Cardiac septum (tissue), 1 donor: ENCODE measurements at regions of chr16 and their contacts with region 1.

Region 1: GRCh38 chr16:4538350-4539235 is at the start of gene CDIP1:
- DNase-seq: peak; percentile 98
- total RNA-seq, gene CDIP1: 42.1 TPM

Region 2: GRCh38 chr16:4574919-4575705 is 36.5 kb after region 1 on chr16:
- intact Hi-C with region 1: no loop called
- DNase-seq: no peak

Region 3: GRCh38 chr16:4614571-4615383 is 76.2 kb after region 1 on chr16 and contains the start of gene UBALD1:
- intact Hi-C with region 1: loop called (anchors 2 kb)
- DNase-seq: peak; percentile 95
- total RNA-seq, gene UBALD1: 25.1 TPM